Ovary (tissue), 10 donors: ENCODE measurements at regions of chr13 and their contacts with region 1.

Region 1: DNA sequence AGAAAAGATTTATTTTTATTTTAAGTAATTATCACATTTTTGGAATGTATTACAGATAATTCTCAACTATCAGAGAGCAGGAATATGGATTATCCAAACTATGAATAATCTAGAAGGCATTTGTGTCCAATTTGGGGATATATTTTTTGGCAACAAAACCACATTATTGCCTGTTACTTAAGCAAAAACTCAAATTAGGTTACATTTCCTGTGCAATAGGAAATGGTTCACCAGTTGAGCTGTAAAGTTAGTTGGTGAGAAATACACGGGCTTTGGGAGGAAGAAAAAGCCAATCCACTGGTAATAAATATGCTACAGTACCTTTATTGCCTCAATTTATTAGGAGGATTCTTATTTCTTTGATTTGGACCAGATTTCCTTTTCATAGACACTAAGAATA is 1075.2 kb downstream of the PCDH9 start:
- DNase-seq: no peak
- H3K4me3 ChIP-seq: no peak overlapping the region
- H3K27ac ChIP-seq: no peak overlapping the region
- H3K4me1 ChIP-seq: no peaks in the 10 kb centered on the region
- H3K27me3 ChIP-seq: no peaks in the 10 kb centered on the region
- CTCF ChIP-seq: no peak
- EP300 ChIP-seq: no peak
- POLR2A ChIP-seq: no peak

Region 2: DNA sequence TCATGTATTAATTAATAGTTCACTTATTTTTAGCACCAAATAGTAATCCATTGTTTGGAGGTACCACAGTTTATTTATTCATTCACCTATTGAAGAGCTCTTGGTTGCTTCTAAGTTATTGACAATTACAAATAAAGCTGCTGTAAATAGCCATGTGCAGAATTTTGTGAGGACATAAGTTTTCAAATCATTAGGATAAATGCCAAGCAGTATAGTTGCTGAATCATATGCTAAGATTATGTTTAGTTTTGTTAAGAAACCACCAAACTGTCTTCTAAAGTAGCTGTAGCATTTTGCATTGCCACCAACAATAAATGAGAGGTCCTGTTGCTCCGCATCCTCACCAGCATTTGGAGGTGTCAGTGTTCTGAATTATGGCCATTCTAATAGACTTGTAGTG is 1051.6 kb before region 1 on chr13:
- intact Hi-C with region 1: loop called in 1 of 4 experiments (anchors 5 kb)
- DNase-seq: no peak
- H3K4me3 ChIP-seq: no peak overlapping the region
- H3K27ac ChIP-seq: no peak overlapping the region
- H3K4me1 ChIP-seq: no peaks in the 10 kb centered on the region
- H3K27me3 ChIP-seq: no peaks in the 10 kb centered on the region
- CTCF ChIP-seq: no peak
- EP300 ChIP-seq: no peak
- POLR2A ChIP-seq: no peak

Region 3: GRCh38 chr13:66138172-66138811 is 16.7 kb before region 1 on chr13:
- intact Hi-C with region 1: no loop called
- DNase-seq: no peak
- H3K4me3 ChIP-seq: no peak overlapping the region
- H3K27ac ChIP-seq: no peak overlapping the region
- H3K4me1 ChIP-seq: no peaks in the 10 kb centered on the region
- H3K27me3 ChIP-seq: no peaks in the 10 kb centered on the region
- CTCF ChIP-seq: no peak
- EP300 ChIP-seq: no peak
- POLR2A ChIP-seq: no peak